Motor neuron (in vitro differentiated cells): ENCODE measurements at regions of chr6 and their contacts with region 1.

Region 1: DNA sequence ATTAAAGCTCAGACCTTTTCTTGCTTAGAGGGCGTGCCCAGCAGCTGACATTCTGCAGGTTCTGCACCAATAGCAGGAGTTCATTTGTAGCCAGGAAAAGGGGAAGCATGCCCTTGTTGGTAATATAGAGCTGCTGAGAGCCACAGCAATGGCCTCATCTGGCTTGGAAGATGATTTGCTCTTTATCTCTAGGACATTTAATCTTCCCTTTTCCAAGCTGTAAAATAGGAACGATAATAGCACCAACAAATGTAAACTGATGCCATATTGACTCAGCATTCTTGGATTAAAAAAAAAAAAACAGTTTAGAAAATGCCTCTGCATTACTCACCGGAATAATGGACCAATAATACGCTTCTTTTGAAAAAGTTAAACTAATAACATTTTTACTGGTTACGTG is 93.4 kb upstream of the SLC2A12 start:
- ATAC-seq: peak; percentile 41 to 84 (median 62)
- H3K4me3 ChIP-seq: no peak overlapping the region
- H3K27ac ChIP-seq: no peak overlapping the region
- H3K4me1 ChIP-seq: peaks cover 3 to 8% of the 10 kb centered on the region in 2 donors

Region 2: GRCh38 chr6:134882426-134883038 is 736.7 kb after region 1 on chr6:
- in situ Hi-C with region 1: loop called in 3 of 9 experiments (anchors 25 kb)
- ATAC-seq: peak; percentile 30 to 69 (median 48)
- H3K4me3 ChIP-seq: no peak overlapping the region
- H3K27ac ChIP-seq: no peak overlapping the region
- H3K4me1 ChIP-seq: no peaks in the 10 kb centered on the region

Region 3: DNA sequence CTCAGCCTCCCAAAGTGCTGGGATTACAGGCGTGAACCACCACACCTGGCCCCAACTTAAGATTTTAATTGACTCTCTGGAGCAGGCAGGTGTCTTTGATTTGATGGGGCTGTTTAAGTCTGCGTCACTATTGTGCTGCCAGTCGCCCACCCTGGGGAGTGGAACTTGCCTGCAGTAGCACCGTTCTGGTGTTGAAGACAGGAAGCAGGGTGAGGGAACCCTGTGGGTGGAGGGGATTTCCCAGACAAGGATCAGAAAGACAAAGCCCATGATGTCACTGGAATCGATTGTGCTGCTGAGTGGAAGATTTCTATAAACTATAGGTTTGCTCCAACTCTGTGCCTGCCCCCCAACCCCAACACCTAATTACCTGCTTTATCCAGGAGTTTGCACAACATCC is 793.1 kb after region 1 on chr6:
- in situ Hi-C with region 1: loop called in 2 of 9 experiments (anchors 25 kb)
- ATAC-seq: no peak
- H3K4me3 ChIP-seq: no peak overlapping the region
- H3K27ac ChIP-seq: no peak overlapping the region
- H3K4me1 ChIP-seq: peaks cover 7 to 17% of the 10 kb centered on the region in 2 donors